ENCODE measurements at regions of chr2 and their contacts with region 1.

Region 1: DNA sequence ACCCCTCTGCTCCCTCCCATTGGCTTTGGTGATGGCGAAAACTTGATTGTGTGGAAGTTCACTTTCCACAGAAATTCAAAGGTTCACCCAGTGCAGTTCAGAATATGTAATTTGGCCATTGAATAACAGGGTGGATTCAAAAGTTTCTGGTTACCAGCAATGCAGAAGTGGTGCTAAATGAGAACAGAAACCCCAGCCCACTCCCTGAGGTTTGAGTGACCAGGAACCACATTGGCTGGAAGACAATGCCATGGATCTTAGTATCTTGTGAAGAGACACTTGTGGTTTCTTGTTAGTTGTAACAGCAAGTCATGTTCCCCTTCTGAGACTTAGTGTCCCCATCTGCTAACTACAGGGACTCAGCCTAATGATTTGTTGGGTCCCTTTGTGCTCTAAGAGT is 49.8 kb downstream of the QPCT start:
- H3K4me3 ChIP-seq: no peak overlapping the region
- H3K27ac ChIP-seq: no peak overlapping the region
- H3K4me1 ChIP-seq: 0 out of 2 replicates have a peak, but pooled peaks cover 7% of the 10 kb centered on the region
- CTCF ChIP-seq: no peak

Region 2: GRCh38 chr2:37376421-37377186 is 17.7 kb before region 1 on chr2:
- CTCF ChIA-PET with region 1: interaction called, 13 read pairs
- POLR2A ChIA-PET with region 1: interaction called, 3 read pairs
- H3K4me3 ChIP-seq: peak overlapping the region; percentile 12; the same call in 1 of the 2 replicates
- H3K27ac ChIP-seq: peak overlapping the region; percentile 53
- H3K4me1 ChIP-seq: peaks cover 12% of the 10 kb centered on the region
- CTCF ChIP-seq: no peak

Region 3: DNA sequence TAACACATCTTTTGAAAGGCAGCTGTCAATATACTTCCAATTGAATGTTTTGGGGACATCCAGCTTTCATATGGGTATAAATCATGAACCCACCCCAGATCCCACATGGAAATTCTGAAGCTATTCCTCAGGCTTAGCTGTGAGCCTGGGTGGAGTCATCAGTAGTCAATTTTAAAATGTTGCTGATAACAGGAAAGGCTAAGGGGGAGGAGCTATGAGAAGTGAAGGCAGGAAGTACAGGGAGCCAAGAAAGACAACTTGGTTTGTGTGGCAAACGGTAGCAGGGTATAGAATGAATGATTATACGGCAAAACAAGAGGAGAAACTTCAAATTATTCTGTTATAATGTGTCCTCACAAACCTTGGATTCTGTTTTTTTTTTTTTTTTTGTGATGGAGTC is 58.8 kb after region 1 on chr2:
- CTCF ChIA-PET with region 1: no interaction called
- POLR2A ChIA-PET with region 1: no interaction called
- H3K4me3 ChIP-seq: no peak overlapping the region
- H3K27ac ChIP-seq: no peak overlapping the region
- H3K4me1 ChIP-seq: peaks cover 8% of the 10 kb centered on the region
- CTCF ChIP-seq: no peak

Region 4: GRCh38 chr2:37890893-37891495 is 496.7 kb after region 1 on chr2:
- CTCF ChIA-PET with region 1: interaction called, 24 read pairs
- POLR2A ChIA-PET with region 1: no interaction called
- H3K4me3 ChIP-seq: no peak overlapping the region
- H3K27ac ChIP-seq: no peak overlapping the region
- H3K4me1 ChIP-seq: no peaks in the 10 kb centered on the region
- CTCF ChIP-seq: peak; percentile 15; the same call in 1 of the 2 replicates